PC-9 (cell line): ENCODE measurements at regions of chr4 and their contacts with region 1.

Region 1: GRCh38 chr4:142265536-142265935 is 580.6 kb downstream of the INPP4B start:
- DNase-seq: peak in 1 of 2 experiments; percentile 53
- H3K4me3 ChIP-seq: 0 out of 2 replicates have a peak overlapping the region, but pooled peaks have one; percentile 17
- H3K27ac ChIP-seq: peak overlapping the region; percentile 75
- H3K4me1 ChIP-seq: peaks cover 25% of the 10 kb centered on the region
- H3K27me3 ChIP-seq: no peaks in the 10 kb centered on the region
- CTCF ChIP-seq: no peak

Region 2: DNA sequence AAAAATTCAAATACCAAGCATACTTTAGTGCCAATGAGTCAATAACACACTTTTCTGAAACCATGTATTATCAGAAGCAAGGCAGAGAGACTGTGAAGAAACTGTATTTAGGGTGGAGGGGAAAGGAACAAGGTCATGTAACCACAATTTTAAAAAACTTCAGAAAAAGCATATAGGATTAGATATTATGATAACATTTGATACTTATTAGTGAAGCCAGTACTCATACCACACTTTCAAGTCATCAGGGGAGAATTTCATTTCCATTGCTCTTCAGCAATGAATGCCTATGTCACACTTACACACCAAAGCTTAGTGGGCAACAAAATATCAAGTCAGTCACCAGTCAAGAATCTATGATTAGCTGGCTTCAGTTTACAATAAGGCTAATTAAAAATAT is 26.9 kb before region 1 on chr4:
- CTCF ChIA-PET with region 1: no interaction called
- POLR2A ChIA-PET with region 1: no interaction called
- intact Hi-C with region 1: no loop called
- DNase-seq: no peak
- H3K4me3 ChIP-seq: no peak overlapping the region
- H3K27ac ChIP-seq: 0 out of 2 replicates have a peak overlapping the region, but pooled peaks have one; percentile 1
- H3K4me1 ChIP-seq: no peaks in the 10 kb centered on the region
- H3K27me3 ChIP-seq: no peaks in the 10 kb centered on the region
- CTCF ChIP-seq: no peak

Region 3: DNA sequence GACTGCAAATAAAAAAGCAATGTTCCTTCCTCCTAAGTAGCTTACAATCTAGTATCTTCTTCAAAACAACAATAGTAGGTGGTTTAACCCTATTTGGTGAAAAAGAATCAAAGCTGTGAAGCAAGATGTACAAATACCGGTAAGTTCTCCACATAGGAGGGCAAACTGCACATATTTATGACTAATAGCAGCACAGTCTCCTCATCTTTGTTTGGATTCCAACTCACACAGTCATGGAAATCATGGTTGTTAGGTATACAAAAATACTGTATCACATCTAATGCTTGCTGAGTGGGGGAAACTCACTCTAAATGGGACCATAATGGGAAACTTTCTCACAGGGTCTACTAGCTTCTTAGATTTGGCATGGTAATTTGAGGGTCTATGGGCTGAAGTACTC is 16.6 kb before region 1 on chr4:
- CTCF ChIA-PET with region 1: interaction called, 11 read pairs
- POLR2A ChIA-PET with region 1: no interaction called
- intact Hi-C with region 1: no loop called
- DNase-seq: no peak
- H3K4me3 ChIP-seq: no peak overlapping the region
- H3K27ac ChIP-seq: no peak overlapping the region
- H3K4me1 ChIP-seq: no peaks in the 10 kb centered on the region
- H3K27me3 ChIP-seq: no peaks in the 10 kb centered on the region
- CTCF ChIP-seq: no peak

Region 4: DNA sequence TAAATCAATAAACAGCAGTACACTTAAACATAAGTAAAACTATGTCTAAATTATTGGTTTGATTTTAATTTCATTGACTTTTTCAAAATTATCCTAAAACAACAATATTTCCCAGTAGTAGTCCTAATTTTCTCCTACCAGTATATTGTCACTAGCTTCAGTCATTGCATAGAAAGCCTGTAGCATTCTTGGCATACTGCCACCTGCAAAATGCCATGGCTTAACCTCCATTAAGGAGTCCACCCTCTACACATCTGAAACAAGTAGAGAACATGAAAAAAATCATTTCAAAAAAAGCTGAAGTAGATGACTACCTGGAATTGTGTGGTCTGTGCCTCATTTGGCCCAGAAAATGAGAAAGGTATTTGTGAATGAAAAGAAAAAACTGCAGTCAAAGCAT is 232.1 kb after region 1 on chr4:
- CTCF ChIA-PET with region 1: no interaction called
- POLR2A ChIA-PET with region 1: interaction called, 12 read pairs
- intact Hi-C with region 1: no loop called
- DNase-seq: peak in 1 of 2 experiments; percentile 15
- H3K4me3 ChIP-seq: no peak overlapping the region
- H3K27ac ChIP-seq: no peak overlapping the region
- H3K4me1 ChIP-seq: no peaks in the 10 kb centered on the region
- H3K27me3 ChIP-seq: no peaks in the 10 kb centered on the region
- CTCF ChIP-seq: no peak